Gastrocnemius medialis (tissue), 4 donors: ENCODE measurements at regions of chr14 and their contacts with region 1.

Region 1: DNA sequence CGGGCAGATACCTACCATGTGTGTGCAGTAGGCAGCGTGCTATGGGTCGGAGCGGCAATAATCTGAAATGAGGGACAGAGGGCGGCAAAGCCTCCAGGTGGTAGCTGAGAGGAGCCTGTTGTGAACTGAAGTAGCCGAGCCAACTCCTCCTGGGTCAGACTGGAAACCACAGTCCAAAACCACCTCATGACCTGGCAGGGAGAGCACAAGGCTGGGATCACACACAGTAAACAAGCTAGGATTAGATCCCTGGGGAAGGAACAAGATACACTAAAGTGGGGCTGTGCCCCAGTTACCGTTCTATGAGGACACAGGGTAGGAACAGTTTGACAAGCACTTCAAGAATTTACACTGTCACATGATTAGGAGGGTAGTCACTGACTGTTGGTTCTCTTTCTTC is 49.0 kb downstream of the AREL1 start:
- DNase-seq: peak; percentile 96 to 98
- ATAC-seq: peak; percentile 97 to 98
- H3K4me3 ChIP-seq: no peak overlapping the region
- H3K27ac ChIP-seq: peak overlapping the region; percentile 80 to 88 (median 87)
- H3K4me1 ChIP-seq: peaks cover 34 to 58% of the 10 kb centered on the region in 2 donors
- H3K27me3 ChIP-seq: no peaks in the 10 kb centered on the region
- CTCF ChIP-seq: peak in 3 of 5 experiments; percentile 5 to 38 (median 37)
- POLR2A ChIP-seq: peak in 1 of 2 donors; percentile 17

Region 2: GRCh38 chr14:74038015-74038859 is 625.6 kb before region 1 on chr14:
- in situ Hi-C with region 1: no loop called
- intact Hi-C with region 1: no loop called
- DNase-seq: no peak
- ATAC-seq: peak; percentile 39 to 61
- H3K4me3 ChIP-seq: no peak overlapping the region
- H3K27ac ChIP-seq: no peak overlapping the region
- H3K4me1 ChIP-seq: no peaks in the 10 kb centered on the region
- H3K27me3 ChIP-seq: no peaks in the 10 kb centered on the region
- CTCF ChIP-seq: peak; percentile 29 to 69 (median 54)
- POLR2A ChIP-seq: no peak

Region 3: DNA sequence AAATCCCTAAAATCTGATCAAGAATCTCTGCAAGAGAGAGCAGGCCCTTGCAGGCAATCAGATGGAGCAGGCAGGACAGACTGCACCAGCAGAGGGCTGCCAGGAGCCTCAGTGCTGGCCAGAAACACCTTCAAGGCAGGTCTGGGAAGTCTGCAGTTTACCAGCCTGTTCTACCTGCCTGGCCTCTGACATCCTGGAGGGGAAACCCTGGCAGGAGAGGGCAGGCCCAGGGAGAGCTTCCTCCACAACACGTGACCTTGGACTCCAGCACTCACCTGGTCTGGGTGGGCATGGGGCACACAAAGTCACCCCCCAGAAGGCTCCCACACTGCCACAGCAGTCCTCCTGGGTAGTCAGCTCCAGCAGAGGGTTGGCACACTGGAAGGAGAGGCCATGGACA is 114.3 kb before region 1 on chr14:
- in situ Hi-C with region 1: no loop called
- intact Hi-C with region 1: loop called (anchors 5 kb)
- DNase-seq: no peak
- ATAC-seq: no peak
- H3K4me3 ChIP-seq: no peak overlapping the region
- H3K27ac ChIP-seq: peak overlapping the region; percentile 4 to 56 (median 36)
- H3K4me1 ChIP-seq: peaks cover 18 to 28% of the 10 kb centered on the region in 2 donors
- H3K27me3 ChIP-seq: no peaks in the 10 kb centered on the region
- CTCF ChIP-seq: no peak
- POLR2A ChIP-seq: no peak

Region 4: DNA sequence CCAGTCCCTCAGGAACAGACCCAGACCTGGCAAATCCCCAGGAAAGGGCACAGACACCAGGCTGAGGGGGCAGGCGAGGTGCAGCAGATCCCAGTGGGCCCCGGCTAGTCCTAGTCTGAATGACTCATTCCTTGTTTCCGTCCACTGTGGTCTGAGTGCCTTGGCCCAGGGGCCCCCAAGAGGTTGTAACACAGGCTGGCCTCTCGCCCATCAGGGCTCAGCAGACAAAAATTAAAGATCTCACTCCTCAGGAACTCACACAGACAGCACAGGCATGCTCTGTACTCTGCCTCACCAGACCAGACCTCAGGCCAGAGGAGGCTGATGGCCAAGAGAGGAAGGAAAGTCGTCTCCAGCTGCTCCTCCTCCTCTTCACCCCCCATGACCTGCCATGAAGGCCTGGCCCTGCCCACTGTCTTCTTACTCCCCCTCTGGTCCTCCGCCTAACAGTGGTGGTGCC is 44.2 kb before region 1 on chr14:
- in situ Hi-C with region 1: no loop called
- intact Hi-C with region 1: no loop called
- DNase-seq: peak; percentile 57 to 86
- ATAC-seq: peak; percentile 71 to 83
- H3K4me3 ChIP-seq: no peak overlapping the region
- H3K27ac ChIP-seq: peak overlapping the region; percentile 47 to 66 (median 54)
- H3K4me1 ChIP-seq: peaks cover 9 to 15% of the 10 kb centered on the region in 2 donors
- H3K27me3 ChIP-seq: peaks cover 0 to 12% (median 0%) of the 10 kb centered on the region in 3 donors
- CTCF ChIP-seq: no peak
- POLR2A ChIP-seq: peak in 1 of 2 donors; percentile 22

Region 5: DNA sequence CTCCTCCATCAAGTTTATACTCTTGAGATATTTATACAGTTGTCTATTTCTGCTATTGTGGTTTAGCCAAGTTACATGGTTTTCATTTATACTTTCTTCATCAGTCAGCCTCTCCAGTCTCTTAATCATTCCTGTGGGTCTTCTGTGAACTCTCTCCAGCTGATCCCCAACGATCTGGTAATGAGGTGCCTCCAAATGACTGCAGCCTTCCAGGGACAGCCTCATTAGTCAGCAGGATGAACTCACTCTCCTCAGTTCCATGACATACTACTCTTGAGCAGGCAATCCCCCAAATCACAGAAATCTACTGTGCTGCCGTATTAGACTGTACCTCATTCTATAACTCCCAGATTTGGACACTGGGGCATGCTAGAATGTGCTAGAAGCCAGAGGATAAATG is 33.7 kb after region 1 on chr14:
- in situ Hi-C with region 1: no loop called
- intact Hi-C with region 1: no loop called
- DNase-seq: no peak
- ATAC-seq: no peak
- H3K4me3 ChIP-seq: no peak overlapping the region
- H3K27ac ChIP-seq: no peak overlapping the region
- H3K4me1 ChIP-seq: peaks cover 9 to 12% of the 10 kb centered on the region in 2 donors
- H3K27me3 ChIP-seq: no peaks in the 10 kb centered on the region
- CTCF ChIP-seq: no peak
- POLR2A ChIP-seq: no peak

Region 6: DNA sequence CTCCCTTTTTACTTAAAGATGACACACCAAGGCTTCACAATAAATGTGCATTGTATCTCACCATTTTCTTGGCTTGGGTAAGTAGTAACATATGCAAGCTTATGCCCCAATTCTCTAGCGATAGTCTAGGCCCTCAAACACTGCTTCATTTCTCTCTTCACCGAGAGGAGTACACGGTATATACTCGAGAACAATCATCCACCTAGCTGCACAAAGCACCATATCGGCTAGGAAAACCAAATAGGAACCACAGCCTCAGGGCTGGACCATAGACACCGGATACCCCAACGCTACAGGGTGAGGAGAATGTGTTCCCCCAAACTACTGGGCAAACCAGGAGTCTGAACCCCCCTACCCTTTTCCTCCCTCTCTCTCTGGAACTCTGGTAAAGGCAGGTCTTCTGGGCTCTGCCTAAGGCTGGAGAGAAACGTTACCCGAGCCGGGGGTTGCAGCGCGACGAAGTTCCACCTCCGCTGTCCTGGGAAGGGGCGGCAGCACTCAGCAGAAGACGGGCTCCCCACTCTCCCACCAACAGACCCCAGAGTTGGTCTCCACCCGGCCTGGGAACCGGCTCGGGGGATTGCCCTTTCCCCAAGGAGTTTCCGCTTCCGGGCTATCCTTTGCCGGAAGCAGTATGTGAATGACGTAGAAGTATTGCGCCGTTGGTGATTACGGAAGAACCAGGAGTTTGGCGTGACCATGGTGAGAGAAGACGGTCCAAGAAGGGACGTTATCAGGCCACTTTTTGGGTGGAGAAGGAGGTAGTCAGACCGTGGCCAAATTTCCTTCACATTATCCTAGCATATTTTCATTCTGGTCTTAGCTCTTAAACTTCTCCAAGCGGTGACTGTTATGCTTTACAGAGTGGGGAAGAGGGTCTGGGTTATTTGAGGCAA is 48.9 kb after region 1 on chr14 and contains the starts of genes AREL1 and FCF1:
- in situ Hi-C with region 1: no loop called
- intact Hi-C with region 1: loop called (anchors 2 kb)
- DNase-seq: peak; percentile 79 to 82
- ATAC-seq: peak; percentile 100
- H3K4me3 ChIP-seq: peak within 1 kb of the TSS; percentile 75 to 97 (median 82)
- H3K27ac ChIP-seq: peak within 1 kb of the TSS; percentile 80 to 91 (median 87)
- H3K4me1 ChIP-seq: peaks cover 19 to 23% of the 10 kb centered on the region in 2 donors
- H3K27me3 ChIP-seq: no peaks in the 10 kb centered on the region
- CTCF ChIP-seq: no peak
- POLR2A ChIP-seq: peak; percentile 83 to 84
- total RNA-seq, gene AREL1: 14.7 to 30.1 (median 22.1) TPM
- total RNA-seq, gene FCF1: 15.1 to 22.9 (median 18.6) TPM

Region 7: DNA sequence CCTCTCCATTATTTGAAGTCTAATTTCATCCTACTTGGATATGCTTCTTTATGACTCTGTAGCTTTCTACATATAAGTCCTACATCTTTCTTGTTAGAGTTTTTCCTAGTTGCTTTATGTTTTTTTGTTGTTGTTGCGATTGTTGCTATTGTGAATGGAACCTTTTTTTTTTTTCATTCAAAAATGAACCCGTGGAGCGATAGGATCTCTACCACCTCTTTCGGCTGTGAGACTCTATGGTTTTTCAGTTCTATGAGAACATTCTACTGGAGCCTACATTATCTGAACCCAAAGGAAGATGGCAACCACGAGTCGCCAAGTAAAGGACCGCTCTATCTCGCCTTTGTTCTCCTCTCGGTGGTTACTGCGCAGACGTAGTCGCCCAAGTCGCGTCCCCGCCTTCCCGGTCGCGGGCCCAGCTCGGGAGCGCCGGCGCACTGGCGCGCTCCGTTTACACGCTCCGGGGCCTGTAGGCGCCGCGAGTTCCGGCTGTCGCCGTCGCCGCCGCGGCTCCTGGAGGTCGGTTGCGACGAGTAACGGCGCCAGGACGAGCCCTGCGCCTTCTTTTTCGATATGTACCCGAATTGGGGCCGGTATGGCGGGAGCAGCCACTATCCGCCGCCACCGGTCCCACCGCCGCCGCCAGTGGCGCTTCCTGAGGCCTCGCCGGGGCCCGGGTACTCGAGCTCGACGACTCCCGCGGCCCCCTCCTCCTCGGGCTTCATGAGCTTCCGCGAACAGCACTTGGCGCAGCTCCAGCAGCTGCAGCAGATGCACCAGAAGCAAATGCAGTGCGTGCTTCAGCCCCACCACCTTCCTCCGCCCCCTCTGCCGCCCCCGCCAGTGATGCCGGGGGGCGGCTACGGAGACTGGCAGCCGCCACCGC is 99.3 kb after region 1 on chr14 and contains the start of gene YLPM1:
- in situ Hi-C with region 1: no loop called
- intact Hi-C with region 1: loop called (anchors 1 kb)
- DNase-seq: peak; percentile 89 to 92
- ATAC-seq: peak; percentile 100
- H3K4me3 ChIP-seq: peak within 1 kb of the TSS; percentile 78 to 99 (median 88)
- H3K27ac ChIP-seq: peak within 1 kb of the TSS; percentile 88 to 94 (median 90)
- H3K4me1 ChIP-seq: peaks cover 40 to 45% of the 10 kb centered on the region in 2 donors
- H3K27me3 ChIP-seq: no peaks in the 10 kb centered on the region
- CTCF ChIP-seq: peak in 3 of 5 experiments; percentile 28 to 44 (median 29)
- POLR2A ChIP-seq: peak; percentile 80 to 89
- total RNA-seq, gene YLPM1: 22.2 to 29.2 (median 25.8) TPM

Region 8: DNA sequence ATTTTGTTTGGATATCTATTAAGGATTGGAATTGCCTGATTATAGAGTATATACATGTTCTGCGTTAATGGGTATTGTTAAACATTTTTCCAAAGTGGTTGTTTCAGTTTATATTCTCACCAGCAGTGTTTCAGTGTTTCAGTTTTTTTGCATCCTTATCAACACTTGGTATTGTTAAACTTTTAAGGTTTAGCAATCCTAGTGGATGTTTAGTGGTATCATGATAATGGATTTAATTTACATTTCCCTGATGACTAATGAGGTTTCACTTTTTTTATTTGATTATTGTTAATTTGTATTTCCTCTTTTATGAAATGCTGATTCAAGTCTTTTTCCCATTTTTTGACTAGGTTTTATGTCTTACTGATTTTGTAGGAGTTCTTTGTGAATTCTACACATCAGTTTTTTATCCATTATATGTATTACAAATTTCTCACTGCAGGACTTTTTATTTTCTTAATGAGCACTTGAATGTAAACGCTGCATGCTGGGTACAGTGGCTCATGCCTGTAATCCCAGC is 123.0 kb after region 1 on chr14:
- in situ Hi-C with region 1: no loop called
- intact Hi-C with region 1: no loop called
- DNase-seq: no peak
- ATAC-seq: no peak
- H3K4me3 ChIP-seq: no peak overlapping the region
- H3K27ac ChIP-seq: no peak overlapping the region
- H3K4me1 ChIP-seq: peaks cover 3 to 23% of the 10 kb centered on the region in 2 donors
- H3K27me3 ChIP-seq: no peaks in the 10 kb centered on the region
- CTCF ChIP-seq: no peak
- POLR2A ChIP-seq: no peak